Colonic mucosa (tissue), 4 donors: ENCODE measurements at regions of chr5 and their contacts with region 1.

Region 1: GRCh38 chr5:156835905-156836304 is 14.2 kb upstream of the PPP1R2B start:
- DNase-seq: no peak
- H3K4me3 ChIP-seq: no peak overlapping the region
- H3K27ac ChIP-seq: no peak overlapping the region
- H3K4me1 ChIP-seq: no peaks in the 10 kb centered on the region
- H3K27me3 ChIP-seq: no peaks in the 10 kb centered on the region
- CTCF ChIP-seq: no peak

Region 2: GRCh38 chr5:156778139-156778706 is 57.7 kb before region 1 on chr5:
- intact Hi-C with region 1: no loop called
- DNase-seq: no peak
- H3K4me3 ChIP-seq: no peak overlapping the region
- H3K27ac ChIP-seq: no peak overlapping the region
- H3K4me1 ChIP-seq: no peaks in the 10 kb centered on the region
- H3K27me3 ChIP-seq: no peaks in the 10 kb centered on the region
- CTCF ChIP-seq: no peak

Region 3: DNA sequence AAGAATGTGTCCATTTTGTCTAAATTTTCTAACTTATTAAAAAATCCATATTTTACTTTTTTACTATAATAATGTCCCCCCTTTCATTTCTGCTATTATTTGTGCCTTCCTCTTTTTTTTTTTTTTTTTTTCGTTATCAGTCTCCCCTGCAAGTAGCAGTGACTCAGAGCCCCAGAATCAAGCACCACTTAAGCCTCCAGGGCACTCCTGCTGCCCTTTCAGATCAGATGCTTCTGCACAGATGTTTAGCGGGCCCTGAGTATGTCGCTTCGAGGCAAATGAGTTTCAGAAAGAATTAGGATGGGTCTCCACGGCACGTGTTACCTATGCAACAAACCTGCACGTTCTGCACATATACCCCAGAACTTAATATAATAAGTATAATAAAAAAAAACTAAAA is 295.0 kb after region 1 on chr5:
- intact Hi-C with region 1: loop called (anchors 10 kb)
- DNase-seq: no peak
- H3K4me3 ChIP-seq: no peak overlapping the region
- H3K27ac ChIP-seq: no peak overlapping the region
- H3K4me1 ChIP-seq: no peaks in the 10 kb centered on the region
- H3K27me3 ChIP-seq: no peaks in the 10 kb centered on the region
- CTCF ChIP-seq: no peak